Common myeloid progenitor, CD34-positive (primary cell): ENCODE measurements at regions of chr20 and their contacts with region 1.

Region 1: GRCh38 chr20:59207742-59208357 is 44.2 kb downstream of the ZNF831 start:
- DNase-seq: peak; percentile 76 to 90 (median 84)
- H3K4me3 ChIP-seq: no peak overlapping the region
- H3K27ac ChIP-seq: no peak overlapping the region
- H3K4me1 ChIP-seq: no peaks in the 10 kb centered on the region
- H3K27me3 ChIP-seq: peaks cover 0 to 2% (median 0%) of the 10 kb centered on the region in 5 experiments

Region 2: GRCh38 chr20:58850693-58851174 is 357.1 kb before region 1 on chr20 and contains the start of gene GNAS-AS1:
- CTCF ChIA-PET with region 1: no interaction called
- POLR2A ChIA-PET with region 1: no interaction called
- DNase-seq: peak; percentile 52 to 67 (median 66)
- H3K4me3 ChIP-seq: peak within 1 kb of the TSS in 6 of 7 experiments; percentile 2 to 60 (median 24)
- H3K27ac ChIP-seq: no peak within 1 kb of the TSS
- H3K4me1 ChIP-seq: peaks cover 3 to 44% (median 29%) of the 10 kb centered on the region in 4 experiments
- H3K27me3 ChIP-seq: peaks cover 0 to 89% (median 33%) of the 10 kb centered on the region in 5 experiments

Region 3: DNA sequence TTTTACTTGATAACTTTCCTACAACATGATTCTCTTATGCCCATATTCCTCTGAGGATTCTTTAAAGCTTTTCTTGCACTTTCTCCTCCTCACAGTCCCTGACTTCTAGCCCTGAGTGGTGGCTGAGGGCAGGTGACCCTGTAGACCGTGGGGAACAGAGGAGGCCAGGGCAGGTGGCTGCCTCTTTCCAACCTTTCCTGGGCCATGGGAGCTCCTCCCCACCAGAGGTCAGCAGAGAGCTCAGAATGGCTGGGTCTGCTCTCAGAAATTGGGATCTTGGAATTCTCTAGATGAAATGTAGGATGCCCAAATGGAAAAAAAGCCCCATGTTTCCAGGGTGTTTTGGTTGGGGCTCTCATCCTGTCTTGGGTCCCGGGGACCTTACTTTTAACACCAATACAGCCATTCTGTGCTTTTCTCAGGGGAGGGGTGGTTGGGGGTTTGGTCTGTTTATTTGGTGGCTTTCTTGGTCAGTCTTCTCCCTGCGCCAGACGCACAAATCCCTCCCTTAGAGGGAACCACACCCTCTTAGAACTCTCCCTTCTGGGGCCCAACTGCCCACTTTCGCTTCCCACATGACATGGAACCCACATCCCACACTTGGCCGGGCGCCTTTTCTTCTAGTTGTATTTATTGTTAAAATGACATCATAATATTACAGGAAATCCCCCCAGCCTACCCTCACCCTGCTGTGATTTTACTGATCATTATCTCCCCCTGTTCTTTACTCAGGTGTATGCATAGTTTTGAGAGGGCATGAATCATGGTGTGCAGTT is 337.4 kb before region 1 on chr20:
- CTCF ChIA-PET with region 1: interaction called, 14 read pairs
- POLR2A ChIA-PET with region 1: no interaction called
- DNase-seq: peak; percentile 25 to 42 (median 36)
- H3K4me3 ChIP-seq: no peak overlapping the region
- H3K27ac ChIP-seq: no peak overlapping the region
- H3K4me1 ChIP-seq: peaks cover 0 to 7% (median 0%) of the 10 kb centered on the region in 4 experiments
- H3K27me3 ChIP-seq: peaks cover 0 to 8% (median 3%) of the 10 kb centered on the region in 5 experiments

Region 4: GRCh38 chr20:59087829-59088433 is 119.9 kb before region 1 on chr20:
- CTCF ChIA-PET with region 1: interaction called, 83 read pairs
- POLR2A ChIA-PET with region 1: interaction called, 5 read pairs
- DNase-seq: peak; percentile 69 to 83 (median 77)
- H3K4me3 ChIP-seq: no peak overlapping the region
- H3K27ac ChIP-seq: no peak overlapping the region
- H3K4me1 ChIP-seq: no peaks in the 10 kb centered on the region
- H3K27me3 ChIP-seq: peaks cover 0 to 6% (median 0%) of the 10 kb centered on the region in 5 experiments

Region 5: GRCh38 chr20:59094576-59094975 is 113.3 kb before region 1 on chr20:
- CTCF ChIA-PET with region 1: interaction called, 83 read pairs
- POLR2A ChIA-PET with region 1: no interaction called
- DNase-seq: no peak
- H3K4me3 ChIP-seq: no peak overlapping the region
- H3K27ac ChIP-seq: no peak overlapping the region
- H3K4me1 ChIP-seq: no peaks in the 10 kb centered on the region
- H3K27me3 ChIP-seq: no peaks in the 10 kb centered on the region

Region 6: GRCh38 chr20:59153355-59153681 is 54.5 kb before region 1 on chr20:
- CTCF ChIA-PET with region 1: interaction called, 10 read pairs
- POLR2A ChIA-PET with region 1: no interaction called
- DNase-seq: no peak
- H3K4me3 ChIP-seq: no peak overlapping the region
- H3K27ac ChIP-seq: no peak overlapping the region
- H3K4me1 ChIP-seq: peaks cover 5 to 33% (median 29%) of the 10 kb centered on the region in 4 experiments
- H3K27me3 ChIP-seq: peaks cover 0 to 3% (median 1%) of the 10 kb centered on the region in 5 experiments

Region 7: DNA sequence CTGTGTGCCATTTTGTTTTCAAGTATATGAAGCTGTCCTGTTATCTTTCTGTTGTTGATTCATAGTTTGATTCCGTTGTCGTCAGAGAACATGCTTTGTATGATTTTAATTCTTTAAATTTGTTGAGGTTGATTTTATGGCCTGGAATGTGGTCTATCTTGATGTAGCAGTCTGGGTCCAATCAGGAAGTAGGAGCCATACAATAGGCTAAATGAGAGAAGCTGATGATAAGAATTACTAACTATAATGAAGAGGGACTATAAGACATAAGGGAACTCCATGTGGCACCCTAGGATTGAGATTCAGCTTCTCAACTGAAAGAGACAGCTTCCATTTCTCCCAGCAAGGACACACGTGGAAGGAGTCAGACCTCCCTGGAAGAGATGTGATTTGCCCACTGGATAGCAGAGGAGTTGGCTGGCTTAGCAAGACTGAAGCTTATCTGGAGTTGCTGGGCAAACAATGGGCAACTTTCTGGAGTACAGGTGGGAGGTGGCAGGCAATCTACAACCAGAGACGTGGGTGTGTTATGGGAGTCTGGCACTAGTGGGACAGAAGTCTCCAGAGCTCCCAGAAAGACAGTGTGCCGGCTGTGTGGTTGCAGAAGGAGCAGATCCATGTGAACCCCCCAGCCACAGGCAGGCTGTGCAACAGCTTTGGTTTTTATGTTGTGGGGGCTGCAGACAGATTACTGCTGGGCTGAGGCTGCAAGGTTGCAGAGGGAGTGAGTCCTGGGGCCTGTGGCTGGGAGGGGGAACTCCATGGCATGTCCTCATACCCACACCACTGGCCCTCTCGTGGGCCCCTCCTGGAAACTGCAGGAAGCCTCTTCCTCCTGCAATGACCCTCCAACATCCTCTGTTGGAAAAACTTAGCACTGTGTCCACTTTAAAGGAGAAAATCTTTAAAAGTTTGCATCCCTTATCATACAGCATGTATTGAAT is 37.2 kb before region 1 on chr20:
- CTCF ChIA-PET with region 1: interaction called, 14 read pairs
- POLR2A ChIA-PET with region 1: no interaction called
- DNase-seq: no peak
- H3K4me3 ChIP-seq: no peak overlapping the region
- H3K27ac ChIP-seq: no peak overlapping the region
- H3K4me1 ChIP-seq: peaks cover 0 to 5% (median 2%) of the 10 kb centered on the region in 4 experiments
- H3K27me3 ChIP-seq: no peaks in the 10 kb centered on the region

Region 8: GRCh38 chr20:59222253-59223181 is 14.7 kb after region 1 on chr20:
- CTCF ChIA-PET with region 1: interaction called, 22 read pairs
- POLR2A ChIA-PET with region 1: no interaction called
- DNase-seq: peak; percentile 72 to 86 (median 83)
- H3K4me3 ChIP-seq: peak overlapping the region in 6 of 7 experiments; percentile 35 to 71 (median 62)
- H3K27ac ChIP-seq: no peak overlapping the region
- H3K4me1 ChIP-seq: peaks cover 0 to 18% (median 10%) of the 10 kb centered on the region in 4 experiments
- H3K27me3 ChIP-seq: peaks cover 0 to 55% (median 7%) of the 10 kb centered on the region in 5 experiments

Region 9: DNA sequence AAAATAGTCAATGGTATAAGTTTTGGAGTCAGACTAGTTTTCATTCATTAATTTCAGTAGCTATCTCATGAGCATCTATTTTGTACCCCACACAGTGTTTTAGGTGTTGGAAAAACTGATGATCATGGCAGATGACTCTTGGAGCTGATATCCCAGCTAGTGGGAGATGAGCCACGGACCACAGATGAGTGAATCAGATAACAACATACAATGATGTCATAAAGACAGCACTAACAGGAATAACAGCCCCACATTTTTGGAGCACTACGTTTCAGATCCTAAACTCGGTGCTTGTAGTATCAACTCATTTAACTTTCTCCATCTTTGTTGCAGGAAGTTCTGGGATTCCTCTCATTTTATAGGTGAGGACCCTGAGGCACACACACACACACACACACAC is 24.8 kb after region 1 on chr20:
- CTCF ChIA-PET with region 1: no interaction called
- POLR2A ChIA-PET with region 1: no interaction called
- DNase-seq: no peak
- H3K4me3 ChIP-seq: no peak overlapping the region
- H3K27ac ChIP-seq: no peak overlapping the region
- H3K4me1 ChIP-seq: peaks cover 0 to 7% (median 5%) of the 10 kb centered on the region in 4 experiments
- H3K27me3 ChIP-seq: peaks cover 0 to 20% (median 0%) of the 10 kb centered on the region in 5 experiments

Region 10: DNA sequence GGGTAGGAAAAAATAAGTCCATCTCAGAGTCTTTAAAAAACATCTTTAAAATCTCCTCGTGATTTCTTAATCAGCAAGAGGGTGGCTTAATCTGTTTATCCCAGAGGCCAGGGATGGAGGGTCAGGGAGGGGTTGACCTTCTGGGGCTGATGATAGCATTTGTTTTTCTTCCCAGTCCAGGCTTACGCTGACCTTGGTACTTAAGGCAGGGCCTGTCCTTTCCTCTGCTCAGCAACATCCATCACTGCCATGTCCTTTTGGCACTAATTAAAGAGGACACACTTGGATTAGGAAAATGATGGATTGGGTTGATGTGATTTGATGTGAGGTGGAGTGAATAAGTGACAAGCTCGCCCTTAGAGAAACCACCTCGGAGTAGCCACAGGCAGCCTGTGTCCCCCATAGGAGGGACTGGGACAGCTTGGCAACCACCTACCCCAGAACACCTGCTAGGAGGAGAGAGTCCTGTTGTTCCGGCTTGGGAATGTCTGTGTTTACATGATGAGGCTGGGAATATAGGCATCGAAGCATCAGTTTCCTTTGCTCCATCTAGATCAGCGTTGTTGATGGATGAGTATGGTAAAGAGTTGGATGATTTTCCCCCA is 440.7 kb after region 1 on chr20:
- CTCF ChIA-PET with region 1: no interaction called
- POLR2A ChIA-PET with region 1: no interaction called
- DNase-seq: no peak
- H3K4me3 ChIP-seq: no peak overlapping the region
- H3K27ac ChIP-seq: no peak overlapping the region
- H3K4me1 ChIP-seq: no peaks in the 10 kb centered on the region
- H3K27me3 ChIP-seq: peaks cover 0 to 8% (median 0%) of the 10 kb centered on the region in 5 experiments